CD4-positive, alpha-beta memory T cell (primary cell): ENCODE measurements at regions of chr6 and their contacts with region 1.

Region 1: GRCh38 chr6:73610444-73611275 is 43.1 kb downstream of the SLC17A5 start:
- DNase-seq: peak in 4 of 5 donors; percentile 49 to 62 (median 59)
- H3K4me3 ChIP-seq: no peak overlapping the region
- H3K4me3 Mint-ChIP-seq: no peak overlapping the region
- H3K27ac ChIP-seq: no peak overlapping the region
- H3K27ac Mint-ChIP-seq: peak overlapping the region in 5 of 7 donors; percentile 1 to 14 (median 4)
- H3K4me1 ChIP-seq: no peaks in the 10 kb centered on the region
- H3K4me1 Mint-ChIP-seq: peaks cover 0 to 6% (median 4%) of the 10 kb centered on the region in 4 donors
- H3K27me3 ChIP-seq: no peaks in the 10 kb centered on the region
- H3K27me3 Mint-ChIP-seq: no peaks in the 10 kb centered on the region

Region 2: DNA sequence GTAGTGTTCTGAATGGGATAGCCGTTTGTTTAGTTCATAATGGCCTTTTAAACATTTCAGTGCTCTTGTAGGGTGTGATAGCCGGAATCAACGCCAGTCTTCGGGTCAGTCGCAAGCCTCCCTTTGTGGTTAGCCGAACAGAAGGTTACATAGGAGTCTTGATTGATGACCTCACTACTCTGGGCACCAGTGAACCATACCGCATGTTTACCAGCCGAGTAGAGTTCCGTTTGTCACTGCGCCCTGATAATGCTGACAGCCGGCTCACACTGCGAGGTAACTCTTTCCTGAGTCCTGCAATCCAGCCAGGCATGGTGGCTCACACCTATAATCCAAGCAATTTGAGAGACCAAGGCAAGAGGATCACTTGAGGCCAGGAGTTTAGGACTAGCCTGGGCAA is 128.7 kb before region 1 on chr6:
- CTCF ChIA-PET with region 1: interaction called, 14 read pairs
- POLR2A ChIA-PET with region 1: no interaction called
- intact Hi-C with region 1: no loop called
- DNase-seq: no peak
- H3K4me3 ChIP-seq: no peak overlapping the region
- H3K4me3 Mint-ChIP-seq: no peak overlapping the region
- H3K27ac ChIP-seq: no peak overlapping the region
- H3K27ac Mint-ChIP-seq: peak overlapping the region in 2 of 7 donors; percentile 6 to 64
- H3K4me1 ChIP-seq: no peaks in the 10 kb centered on the region
- H3K4me1 Mint-ChIP-seq: peaks cover 0 to 4% (median 1%) of the 10 kb centered on the region in 4 donors
- H3K27me3 ChIP-seq: no peaks in the 10 kb centered on the region
- H3K27me3 Mint-ChIP-seq: no peaks in the 10 kb centered on the region

Region 3: GRCh38 chr6:73497915-73498314 is 112.7 kb before region 1 on chr6:
- CTCF ChIA-PET with region 1: interaction called, 16 read pairs
- POLR2A ChIA-PET with region 1: no interaction called
- intact Hi-C with region 1: no loop called
- DNase-seq: no peak
- H3K4me3 ChIP-seq: no peak overlapping the region
- H3K4me3 Mint-ChIP-seq: no peak overlapping the region
- H3K27ac ChIP-seq: no peak overlapping the region
- H3K27ac Mint-ChIP-seq: peak overlapping the region in 2 of 7 donors; percentile 35 to 63
- H3K4me1 ChIP-seq: no peaks in the 10 kb centered on the region
- H3K4me1 Mint-ChIP-seq: no peaks in the 10 kb centered on the region
- H3K27me3 ChIP-seq: no peaks in the 10 kb centered on the region
- H3K27me3 Mint-ChIP-seq: no peaks in the 10 kb centered on the region

Region 4: DNA sequence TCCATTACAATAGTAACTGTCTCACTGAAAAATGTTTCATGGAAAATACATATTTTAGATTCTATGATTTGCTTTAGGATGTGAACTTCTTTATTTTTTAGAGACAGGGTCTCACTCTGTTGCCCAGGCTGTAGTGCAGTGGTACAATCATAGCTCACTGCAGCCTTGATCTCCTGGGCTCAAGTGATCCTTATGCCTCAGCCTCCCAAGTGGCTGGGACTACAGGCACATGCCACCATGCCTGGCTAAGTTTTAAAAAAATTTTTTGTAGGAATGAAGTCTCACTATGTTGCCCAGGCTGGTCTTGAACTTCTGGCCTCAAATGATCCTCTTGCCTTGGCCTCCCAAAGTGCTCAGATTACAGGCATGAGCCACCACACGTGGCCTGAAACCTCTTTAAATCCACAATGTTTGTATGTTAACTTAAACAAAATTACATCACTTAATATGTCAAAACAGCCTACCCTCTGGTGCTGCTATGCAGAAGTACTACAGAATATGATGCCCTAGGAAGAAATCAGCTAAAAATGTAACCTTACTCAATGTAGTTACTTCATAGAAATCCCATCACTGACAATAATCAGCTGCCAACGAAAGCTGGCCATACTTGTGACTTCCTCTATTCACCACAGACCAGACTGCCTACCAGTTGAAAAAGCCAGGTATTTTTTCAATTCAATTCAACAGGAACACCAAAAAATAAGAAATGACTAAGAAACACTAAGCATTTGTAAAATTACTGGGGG is 107.5 kb before region 1 on chr6:
- CTCF ChIA-PET with region 1: interaction called, 13 read pairs
- POLR2A ChIA-PET with region 1: no interaction called
- intact Hi-C with region 1: no loop called
- DNase-seq: no peak
- H3K4me3 ChIP-seq: no peak overlapping the region
- H3K4me3 Mint-ChIP-seq: no peak overlapping the region
- H3K27ac ChIP-seq: no peak overlapping the region
- H3K27ac Mint-ChIP-seq: peak overlapping the region in 2 of 7 donors; percentile 52 to 88
- H3K4me1 ChIP-seq: no peaks in the 10 kb centered on the region
- H3K4me1 Mint-ChIP-seq: no peaks in the 10 kb centered on the region
- H3K27me3 ChIP-seq: no peaks in the 10 kb centered on the region
- H3K27me3 Mint-ChIP-seq: no peaks in the 10 kb centered on the region

Region 5: DNA sequence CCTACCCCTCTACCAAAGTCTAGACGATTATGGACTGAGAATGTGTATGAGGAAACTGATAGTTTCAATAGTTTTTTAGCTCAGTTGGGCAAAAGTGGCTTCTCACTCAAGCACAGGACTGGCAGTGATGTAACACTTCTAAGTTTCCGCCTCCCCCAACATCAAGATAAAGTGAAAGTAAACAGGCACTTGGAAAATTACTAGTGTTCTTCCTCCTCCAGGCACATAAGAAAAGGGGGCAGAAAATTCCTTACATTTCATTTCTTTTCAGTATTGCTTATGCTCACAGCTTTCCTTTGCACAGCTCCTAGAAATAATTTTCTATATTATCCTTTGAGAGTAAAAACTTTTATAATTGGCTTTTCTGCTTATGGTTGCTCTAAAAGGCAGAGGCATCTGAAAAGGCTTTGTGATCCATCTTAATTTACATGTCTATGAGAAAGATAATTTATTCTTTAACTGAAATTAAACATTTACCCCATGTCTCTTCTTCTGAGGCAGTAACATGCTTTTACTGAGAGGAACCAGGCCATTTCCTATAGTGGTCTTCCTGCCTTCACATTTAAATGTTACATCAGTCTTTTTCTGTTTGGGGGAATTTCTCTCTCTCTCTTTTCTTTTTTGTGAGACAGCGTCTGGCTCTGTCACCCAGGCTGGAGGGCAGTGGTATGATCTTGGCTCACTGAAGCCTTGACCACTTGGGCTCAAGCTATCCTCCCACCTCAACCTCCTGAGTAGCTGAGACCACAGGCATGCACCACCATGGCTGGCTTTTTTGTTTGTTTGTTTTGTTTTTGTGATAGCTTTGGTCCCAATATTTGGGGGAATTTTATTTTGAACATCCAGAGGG is 24.9 kb before region 1 on chr6:
- CTCF ChIA-PET with region 1: interaction called, 24 read pairs
- POLR2A ChIA-PET with region 1: interaction called, 9 read pairs
- intact Hi-C with region 1: no loop called
- DNase-seq: peak; percentile 57 to 69 (median 63)
- H3K4me3 ChIP-seq: peak overlapping the region; percentile 54 to 56
- H3K4me3 Mint-ChIP-seq: peak overlapping the region; percentile 78 to 88 (median 84)
- H3K27ac ChIP-seq: peak overlapping the region; percentile 70
- H3K27ac Mint-ChIP-seq: peak overlapping the region; percentile 93 to 99 (median 98)
- H3K4me1 ChIP-seq: peaks cover 26% of the 10 kb centered on the region
- H3K4me1 Mint-ChIP-seq: peaks cover 15 to 34% (median 19%) of the 10 kb centered on the region in 4 donors
- H3K27me3 ChIP-seq: no peaks in the 10 kb centered on the region
- H3K27me3 Mint-ChIP-seq: no peaks in the 10 kb centered on the region